ENCODE measurements at regions of chr11 and their contacts with region 1.

Region 1: GRCh38 chr11:118412921-118413320 is 11.5 kb downstream of the ATP5MG start:
- DNase-seq: no peak
- H3K4me3 Mint-ChIP-seq: no peak overlapping the region
- H3K27ac Mint-ChIP-seq: peak overlapping the region; percentile 16
- H3K4me1 Mint-ChIP-seq: peaks cover 5% of the 10 kb centered on the region
- H3K27me3 Mint-ChIP-seq: no peaks in the 10 kb centered on the region

Region 2: DNA sequence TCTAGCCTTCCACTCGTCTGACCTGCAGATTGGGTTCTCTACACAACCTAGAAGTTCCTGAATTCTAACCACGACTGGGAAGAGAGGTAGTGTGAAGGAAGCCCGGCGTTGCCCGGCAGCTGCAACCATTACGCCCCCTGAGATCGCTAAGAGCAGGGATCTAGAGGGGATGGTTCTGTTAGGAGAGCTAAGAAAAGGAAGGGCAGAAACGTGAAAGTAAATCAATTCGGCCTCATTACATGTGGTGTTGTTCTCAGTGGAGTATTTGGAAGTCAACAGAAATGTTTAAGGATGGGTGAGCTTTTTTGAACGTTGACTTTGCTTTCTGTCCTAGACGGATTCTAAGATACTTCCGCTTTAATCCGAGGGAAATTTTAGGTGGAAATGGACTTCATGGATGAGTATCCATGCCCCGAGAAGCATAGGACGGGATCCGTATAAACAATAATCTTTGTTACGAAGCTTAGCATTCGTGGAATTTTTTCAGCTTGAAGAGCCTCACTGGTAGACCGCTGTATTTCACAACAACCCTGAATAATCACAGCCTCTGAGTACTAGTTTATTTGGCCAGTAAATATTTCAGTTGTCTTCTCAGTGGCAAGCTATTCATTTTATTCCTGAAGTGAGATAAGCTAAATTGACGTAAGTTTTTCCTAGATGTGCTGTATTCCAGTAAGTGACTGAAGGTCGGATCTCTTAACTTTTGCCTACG is 10.9 kb before region 1 on chr11:
- CTCF ChIA-PET with region 1: interaction called, 11 read pairs
- POLR2A ChIA-PET with region 1: interaction called, 3 read pairs
- DNase-seq: no peak
- H3K4me3 Mint-ChIP-seq: peak overlapping the region; percentile 87
- H3K27ac Mint-ChIP-seq: peak overlapping the region; percentile 99
- H3K4me1 Mint-ChIP-seq: peaks cover 69% of the 10 kb centered on the region
- H3K27me3 Mint-ChIP-seq: no peaks in the 10 kb centered on the region

Measured in activated CD4-positive, alpha-beta T cell treated with anti-CD3 and anti-CD28 coated beads, Interleukin-2, amount 10 ng/mL, durations not matched to agents 7 days and 5 days (primary cell).